Caco-2 (cell line): ENCODE measurements at regions of chr7 and their contacts with region 1.

Region 1: GRCh38 chr7:139737221-139738100 is 40.3 kb downstream of the HIPK2 start:
- DNase-seq: no peak
- H3K4me3 ChIP-seq: no peak overlapping the region
- H3K4me3 Mint-ChIP-seq: no peak overlapping the region
- H3K27ac Mint-ChIP-seq: no peak overlapping the region
- H3K4me1 ChIP-seq: peaks cover 20% of the 10 kb centered on the region
- H3K4me1 Mint-ChIP-seq: peaks cover 13% of the 10 kb centered on the region
- H3K27me3 ChIP-seq: no peaks in the 10 kb centered on the region
- H3K27me3 Mint-ChIP-seq: no peaks in the 10 kb centered on the region
- CTCF ChIP-seq: no peak

Region 2: GRCh38 chr7:139494835-139495579 is 242.5 kb before region 1 on chr7:
- CTCF ChIA-PET with region 1: no interaction called
- POLR2A ChIA-PET with region 1: no interaction called
- intact Hi-C with region 1: no loop called
- DNase-seq: no peak
- H3K4me3 ChIP-seq: no peak overlapping the region
- H3K4me3 Mint-ChIP-seq: no peak overlapping the region
- H3K27ac Mint-ChIP-seq: no peak overlapping the region
- H3K4me1 ChIP-seq: no peaks in the 10 kb centered on the region
- H3K4me1 Mint-ChIP-seq: no peaks in the 10 kb centered on the region
- H3K27me3 ChIP-seq: no peaks in the 10 kb centered on the region
- H3K27me3 Mint-ChIP-seq: no peaks in the 10 kb centered on the region
- CTCF ChIP-seq: no peak

Region 3: GRCh38 chr7:139680676-139681462 is 56.6 kb before region 1 on chr7:
- CTCF ChIA-PET with region 1: no interaction called
- POLR2A ChIA-PET with region 1: no interaction called
- intact Hi-C with region 1: loop called (anchors 5 kb)
- DNase-seq: no peak
- H3K4me3 ChIP-seq: no peak overlapping the region
- H3K4me3 Mint-ChIP-seq: peak overlapping the region; percentile 69
- H3K27ac Mint-ChIP-seq: peak overlapping the region; percentile 98
- H3K4me1 ChIP-seq: peaks cover 66% of the 10 kb centered on the region
- H3K4me1 Mint-ChIP-seq: peaks cover 47% of the 10 kb centered on the region
- H3K27me3 ChIP-seq: no peaks in the 10 kb centered on the region
- H3K27me3 Mint-ChIP-seq: no peaks in the 10 kb centered on the region
- CTCF ChIP-seq: no peak

Region 4: GRCh38 chr7:139691253-139691781 is 46.1 kb before region 1 on chr7:
- CTCF ChIA-PET with region 1: no interaction called
- POLR2A ChIA-PET with region 1: no interaction called
- intact Hi-C with region 1: no loop called
- DNase-seq: no peak
- H3K4me3 ChIP-seq: no peak overlapping the region
- H3K4me3 Mint-ChIP-seq: no peak overlapping the region
- H3K27ac Mint-ChIP-seq: no peak overlapping the region
- H3K4me1 ChIP-seq: no peaks in the 10 kb centered on the region
- H3K4me1 Mint-ChIP-seq: peaks cover 19% of the 10 kb centered on the region
- H3K27me3 ChIP-seq: no peaks in the 10 kb centered on the region
- H3K27me3 Mint-ChIP-seq: no peaks in the 10 kb centered on the region
- CTCF ChIP-seq: no peak